GM10248 (cell line): ENCODE measurements at regions of chr12 and their contacts with region 1.

Region 1: GRCh38 chr12:64551698-64552097 is 58.6 kb upstream of the RASSF3 start:
- DNase-seq: no peak
- CTCF ChIP-seq: no peak

Region 2: GRCh38 chr12:64475518-64475917 is 76.2 kb before region 1 on chr12:
- CTCF ChIA-PET with region 1: no interaction called
- POLR2A ChIA-PET with region 1: no interaction called
- DNase-seq: no peak
- CTCF ChIP-seq: no peak

Region 3: DNA sequence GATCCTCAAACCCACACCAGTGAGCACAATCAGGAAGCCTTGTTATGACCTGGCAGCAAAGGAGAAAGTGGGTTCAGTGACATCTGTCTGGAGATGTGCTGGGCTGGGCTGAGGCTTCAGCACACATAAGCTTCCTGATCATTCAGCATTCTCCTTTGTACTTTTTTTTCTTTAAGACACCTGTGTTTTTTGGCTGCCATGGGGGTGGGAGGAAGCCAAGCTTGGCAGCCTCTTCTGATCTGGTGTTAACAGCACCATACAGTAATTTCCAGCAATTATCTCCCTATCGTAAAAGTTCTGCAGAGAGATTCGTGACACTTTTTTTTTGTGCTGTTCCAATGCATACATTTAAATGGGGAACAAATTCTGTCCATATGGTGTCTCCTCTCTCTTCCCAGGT is 19.7 kb after region 1 on chr12:
- CTCF ChIA-PET with region 1: interaction called, 11 read pairs
- POLR2A ChIA-PET with region 1: no interaction called
- DNase-seq: no peak
- CTCF ChIP-seq: no peak

Region 4: DNA sequence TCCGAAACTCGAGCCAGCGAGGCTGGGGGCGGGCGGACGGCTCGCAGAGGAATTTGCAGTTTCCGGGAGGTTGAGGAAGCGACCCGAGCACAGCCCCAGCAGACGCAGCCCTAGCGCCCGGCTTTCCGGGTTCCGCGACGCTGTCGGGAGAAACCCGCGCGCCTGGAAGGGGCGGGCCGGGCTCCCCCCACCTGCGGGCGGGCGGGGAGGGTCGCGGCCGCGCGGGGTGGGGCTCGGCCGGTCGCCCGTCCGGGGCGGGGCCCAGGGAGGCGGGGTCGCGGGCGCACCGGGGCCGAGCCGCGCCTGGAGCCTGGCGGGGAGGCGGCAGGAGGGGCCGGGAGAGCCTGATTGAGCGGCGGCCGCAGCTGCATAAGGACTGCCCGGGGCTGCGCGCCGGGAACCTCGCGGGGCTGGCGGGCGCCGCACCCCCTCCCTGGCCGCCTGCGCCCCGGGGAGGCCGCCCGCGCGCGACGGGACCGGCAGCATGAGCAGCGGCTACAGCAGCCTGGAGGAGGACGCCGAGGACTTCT is 58.5 kb after region 1 on chr12 and contains the start of gene RASSF3:
- CTCF ChIA-PET with region 1: interaction called, 13 read pairs
- POLR2A ChIA-PET with region 1: no interaction called
- DNase-seq: peak; percentile 89
- CTCF ChIP-seq: no peak

Region 5: DNA sequence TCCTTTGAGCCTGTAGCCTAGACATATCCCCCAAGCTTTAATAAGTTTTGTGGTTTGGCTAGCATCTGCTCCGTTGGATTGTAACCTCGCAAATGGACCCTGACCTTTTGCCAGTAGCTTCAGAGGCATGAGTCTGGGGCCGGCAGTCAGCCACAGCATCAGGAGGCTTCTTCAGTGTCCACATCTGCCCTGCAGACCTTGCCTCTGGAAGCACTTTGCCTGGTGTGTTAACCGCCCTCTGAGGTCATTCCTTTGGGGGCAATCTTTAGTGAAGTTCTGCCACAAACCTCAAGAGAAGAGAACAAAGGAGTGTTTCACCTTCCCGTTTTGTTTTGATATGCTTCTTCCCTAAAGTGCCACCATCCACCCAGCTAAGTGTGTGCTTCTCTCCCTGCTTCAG is 136.1 kb after region 1 on chr12:
- CTCF ChIA-PET with region 1: interaction called, 15 read pairs
- POLR2A ChIA-PET with region 1: no interaction called
- DNase-seq: no peak
- CTCF ChIP-seq: no peak

Region 6: DNA sequence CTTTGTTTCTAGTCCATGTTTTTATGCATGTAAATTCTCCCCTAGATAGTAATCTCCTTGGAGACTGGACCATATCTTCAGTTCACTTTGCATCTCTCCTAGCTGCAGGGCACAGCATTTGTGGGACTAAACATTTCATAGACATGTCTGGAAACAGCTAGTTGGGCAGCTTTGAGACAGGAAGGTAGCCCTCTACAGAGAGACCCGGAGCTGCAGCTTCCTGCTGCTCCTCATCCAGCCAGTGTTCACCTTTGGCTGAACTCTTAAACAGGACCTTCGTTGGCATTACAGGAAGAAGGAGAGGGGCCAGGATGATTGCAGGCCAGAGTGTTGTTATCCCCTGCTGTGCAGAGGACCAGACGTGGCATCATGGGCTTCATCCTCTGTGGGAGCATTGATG is 154.6 kb after region 1 on chr12:
- CTCF ChIA-PET with region 1: interaction called, 172 read pairs
- POLR2A ChIA-PET with region 1: interaction called, 3 read pairs
- DNase-seq: no peak
- CTCF ChIP-seq: no peak

Region 7: GRCh38 chr12:66203820-66204219 is 1652.1 kb after region 1 on chr12:
- CTCF ChIA-PET with region 1: no interaction called
- POLR2A ChIA-PET with region 1: no interaction called
- DNase-seq: no peak
- CTCF ChIP-seq: no peak